AG04449 (cell line): ENCODE measurements at regions of chr3 and their contacts with region 1.

Region 1: GRCh38 chr3:27253831-27254230 is 115.4 kb downstream of the NEK10 start:
- DNase-seq: no peak
- H3K4me3 ChIP-seq: no peak overlapping the region
- CTCF ChIP-seq: peak; percentile 62

Region 2: DNA sequence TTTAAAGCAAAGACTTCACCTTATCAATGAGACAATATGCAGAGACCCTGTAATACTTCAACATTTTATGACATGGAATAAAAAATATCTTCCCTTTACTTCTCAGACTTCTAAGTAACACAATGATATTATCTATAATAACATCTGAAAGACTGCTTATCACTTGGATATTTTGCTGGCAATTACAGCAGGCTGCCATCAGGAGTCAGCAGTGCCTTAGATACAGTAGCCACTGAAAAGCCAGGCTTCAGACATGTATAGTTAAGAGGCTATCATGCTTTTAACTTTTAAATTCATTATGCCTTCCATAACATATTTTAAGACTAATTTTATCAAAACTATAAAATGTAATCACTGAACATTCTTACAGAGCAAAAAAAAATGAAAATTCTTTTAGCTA is 112.2 kb before region 1 on chr3:
- CTCF ChIA-PET with region 1: interaction called, 248 read pairs
- POLR2A ChIA-PET with region 1: no interaction called
- DNase-seq: no peak
- H3K4me3 ChIP-seq: no peak overlapping the region
- CTCF ChIP-seq: no peak

Region 3: DNA sequence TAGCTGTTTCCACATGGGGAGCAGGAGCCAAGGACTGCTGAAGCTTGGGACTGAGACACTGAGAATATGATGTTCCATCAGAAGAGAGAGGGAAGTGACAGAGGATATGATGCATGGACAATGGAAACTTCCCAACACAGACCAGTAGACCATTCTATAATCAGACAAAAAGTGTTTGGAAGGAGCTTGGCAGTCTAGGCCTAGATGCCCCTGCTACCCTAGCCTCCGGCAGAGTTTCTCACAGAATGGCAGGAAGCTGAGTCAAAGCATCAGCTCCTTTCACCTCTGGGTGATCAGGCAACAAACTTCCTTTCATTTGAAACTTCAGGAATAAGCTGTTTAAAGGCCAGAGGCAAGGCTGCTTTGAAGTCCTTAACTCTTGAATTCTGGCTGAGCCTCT is 106.6 kb before region 1 on chr3:
- CTCF ChIA-PET with region 1: interaction called, 23 read pairs
- POLR2A ChIA-PET with region 1: no interaction called
- DNase-seq: no peak
- H3K4me3 ChIP-seq: no peak overlapping the region
- CTCF ChIP-seq: no peak